ENCODE measurements at regions of chr7 and their contacts with region 1.

Region 1: DNA sequence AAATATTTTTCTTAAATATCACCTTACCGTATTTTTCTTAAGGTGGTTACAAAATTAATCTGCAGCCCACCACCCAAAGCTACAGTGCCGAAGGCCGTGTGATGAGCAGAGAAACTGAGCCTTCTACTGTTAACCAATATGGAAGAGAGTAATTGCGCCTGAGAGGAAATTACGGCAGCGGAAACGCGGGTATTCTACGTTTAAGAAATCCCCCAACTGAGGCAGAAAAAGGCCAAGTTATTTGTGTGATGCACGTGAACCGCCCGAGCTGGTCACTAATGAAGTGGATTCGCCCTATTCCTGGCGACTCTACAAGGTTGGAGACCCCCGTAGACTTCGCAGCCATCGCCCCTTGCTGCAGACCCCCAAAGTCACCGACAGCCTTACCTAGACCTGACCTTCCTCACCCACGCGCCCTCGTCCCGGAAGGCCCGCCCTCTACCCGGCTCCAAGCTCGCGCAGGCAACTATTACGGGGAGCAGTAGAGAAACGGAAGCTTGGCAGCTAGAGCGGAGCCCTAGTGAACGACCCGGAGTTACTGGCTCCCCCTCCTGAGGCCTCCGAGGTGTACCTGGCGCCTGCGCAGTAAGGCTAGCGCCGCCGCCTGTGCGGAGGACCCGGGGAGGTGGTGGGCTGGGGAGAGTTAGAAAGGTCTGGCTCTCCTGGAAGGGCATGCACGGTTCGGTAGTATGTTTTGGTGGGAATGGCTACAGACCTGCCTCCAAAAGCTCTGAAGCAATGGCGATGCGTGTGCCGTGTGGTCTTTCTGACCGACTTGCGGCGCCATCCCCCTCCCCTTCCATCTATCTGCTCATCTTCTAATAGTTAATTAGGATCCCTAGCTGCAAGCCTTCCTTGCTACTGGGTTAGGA is at the start of gene MRPS33:
- DNase-seq: peak; percentile 96
- H3K4me3 ChIP-seq: peak within 1 kb of the TSS; percentile 47 to 97 (median 67)
- H3K27ac ChIP-seq: peak within 1 kb of the TSS; percentile 92
- H3K4me1 ChIP-seq: peaks cover 6% of the 10 kb centered on the region
- H3K27me3 ChIP-seq: peaks cover 2% of the 10 kb centered on the region in 2 experiments
- CTCF ChIP-seq: peak; percentile 67 to 72
- POLR2A ChIP-seq: peak; percentile 81
- total RNA-seq, gene MRPS33: 34.1 and 37.4 TPM in 2 replicates

Region 2: DNA sequence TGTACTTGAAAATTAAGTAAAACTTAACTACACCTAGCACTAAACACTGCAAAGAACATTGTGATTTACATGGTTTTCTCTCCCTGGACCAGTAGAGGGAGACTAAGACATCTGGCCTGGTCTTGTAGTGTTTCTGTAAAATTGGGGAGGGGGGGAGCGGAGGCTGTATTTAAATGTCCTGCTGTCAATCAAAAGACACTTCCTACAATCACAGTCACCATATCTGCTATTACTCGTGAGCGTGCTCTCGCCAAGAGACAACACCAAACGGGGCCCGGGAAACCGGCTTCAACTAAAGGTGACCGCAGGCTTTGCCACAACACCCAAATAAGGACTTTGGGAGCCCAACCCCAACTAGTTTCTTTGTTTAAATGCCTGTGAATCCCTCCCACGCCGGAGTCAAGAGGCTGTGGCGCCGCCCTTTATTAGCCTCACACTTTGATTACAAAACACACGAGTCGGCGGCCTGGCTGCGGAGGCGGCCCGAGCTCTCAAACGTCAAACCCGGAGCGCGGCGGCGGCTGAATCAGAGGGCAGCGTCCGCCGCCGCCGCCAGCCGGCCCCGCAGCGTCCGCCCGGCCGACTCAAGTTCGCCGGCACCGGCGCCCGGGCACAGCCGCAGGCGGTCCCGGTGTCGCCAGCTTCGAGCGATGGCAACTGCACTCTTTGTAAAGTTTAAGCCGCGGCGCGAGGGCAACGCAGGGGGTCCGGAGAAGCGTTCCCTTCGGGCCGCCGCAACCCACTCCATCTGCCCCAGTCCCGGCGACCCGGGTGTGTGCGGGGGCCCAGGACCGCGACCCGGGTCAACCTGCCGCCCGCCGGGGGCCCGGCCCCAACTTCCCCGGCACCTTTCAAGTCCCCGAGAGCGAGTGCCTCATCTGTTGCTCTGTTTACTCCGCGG is 839.3 kb before region 1 on chr7:
- CTCF ChIA-PET with region 1: no interaction called
- POLR2A ChIA-PET with region 1: no interaction called
- dilution Hi-C with region 1: no loop called
- intact Hi-C with region 1: loop called (anchors 2 kb)
- DNase-seq: peak; percentile 95
- H3K4me3 ChIP-seq: peak overlapping the region; percentile 72 to 95 (median 94)
- H3K27ac ChIP-seq: peak overlapping the region; percentile 79
- H3K4me1 ChIP-seq: peaks cover 8% of the 10 kb centered on the region
- H3K27me3 ChIP-seq: peaks cover 0 to 3% of the 10 kb centered on the region in 2 experiments
- CTCF ChIP-seq: peak; percentile 60 to 75
- POLR2A ChIP-seq: peak; percentile 54

Region 3: GRCh38 chr7:140653319-140654108 is 361.2 kb before region 1 on chr7:
- CTCF ChIA-PET with region 1: interaction called, 6 read pairs
- POLR2A ChIA-PET with region 1: no interaction called
- dilution Hi-C with region 1: no loop called
- intact Hi-C with region 1: loop called (anchors 5 kb)
- DNase-seq: peak; percentile 62
- H3K4me3 ChIP-seq: no peak overlapping the region
- H3K27ac ChIP-seq: no peak overlapping the region
- H3K4me1 ChIP-seq: peaks cover 8% of the 10 kb centered on the region
- H3K27me3 ChIP-seq: no peaks in the 10 kb centered on the region
- CTCF ChIP-seq: peak; percentile 65 to 74
- POLR2A ChIP-seq: no peak

Region 4: GRCh38 chr7:140696680-140697446 is 317.9 kb before region 1 on chr7 and contains the start of gene NDUFB2:
- CTCF ChIA-PET with region 1: no interaction called
- POLR2A ChIA-PET with region 1: no interaction called
- dilution Hi-C with region 1: no loop called
- intact Hi-C with region 1: loop called (anchors 1 kb)
- DNase-seq: peak; percentile 92
- H3K4me3 ChIP-seq: peak within 1 kb of the TSS; percentile 45 to 79 (median 66)
- H3K27ac ChIP-seq: peak within 1 kb of the TSS; percentile 43
- H3K4me1 ChIP-seq: peaks cover 12% of the 10 kb centered on the region
- H3K27me3 ChIP-seq: no peaks in the 10 kb centered on the region
- CTCF ChIP-seq: no peak
- POLR2A ChIP-seq: peak; percentile 73
- total RNA-seq, gene NDUFB2: 197 and 221 TPM in 2 replicates

Region 5: GRCh38 chr7:141362580-141363435 is 348.0 kb after region 1 on chr7:
- CTCF ChIA-PET with region 1: no interaction called
- POLR2A ChIA-PET with region 1: no interaction called
- dilution Hi-C with region 1: no loop called
- intact Hi-C with region 1: loop called (anchors 2 kb)
- DNase-seq: peak; percentile 73
- H3K4me3 ChIP-seq: no peak overlapping the region
- H3K27ac ChIP-seq: peak overlapping the region; percentile 93
- H3K4me1 ChIP-seq: peaks cover 36% of the 10 kb centered on the region
- H3K27me3 ChIP-seq: no peaks in the 10 kb centered on the region
- CTCF ChIP-seq: no peak
- POLR2A ChIP-seq: no peak

Region 6: GRCh38 chr7:141737834-141738591 is 723.3 kb after region 1 on chr7 and contains the start of gene SSBP1:
- CTCF ChIA-PET with region 1: interaction called, 7 read pairs
- POLR2A ChIA-PET with region 1: no interaction called
- dilution Hi-C with region 1: no loop called
- intact Hi-C with region 1: loop called (anchors 1 kb)
- DNase-seq: peak; percentile 99
- H3K4me3 ChIP-seq: peak within 1 kb of the TSS; percentile 74 to 99 (median 96)
- H3K27ac ChIP-seq: peak within 1 kb of the TSS; percentile 92
- H3K4me1 ChIP-seq: peaks cover 16% of the 10 kb centered on the region
- H3K27me3 ChIP-seq: no peaks in the 10 kb centered on the region
- CTCF ChIP-seq: peak; percentile 76 to 86
- POLR2A ChIP-seq: peak; percentile 89
- total RNA-seq, gene SSBP1: 164 and 169 TPM in 2 replicates

Measured in endothelial cell of umbilical vein (primary cell).